ENCODE measurements at regions of chr9 and their contacts with region 1.

Region 1: GRCh38 chr9:76219560-76220152 is 174.6 kb downstream of the RFK start:
- DNase-seq: no peak
- H3K4me3 ChIP-seq: no peak overlapping the region
- H3K4me3 Mint-ChIP-seq: no peak overlapping the region
- H3K27ac Mint-ChIP-seq: no peak overlapping the region
- H3K4me1 ChIP-seq: no peaks in the 10 kb centered on the region
- H3K4me1 Mint-ChIP-seq: peaks cover 9% of the 10 kb centered on the region
- H3K27me3 ChIP-seq: no peaks in the 10 kb centered on the region
- H3K27me3 Mint-ChIP-seq: no peaks in the 10 kb centered on the region
- CTCF ChIP-seq: no peak

Region 2: GRCh38 chr9:76032038-76032796 is 187.4 kb before region 1 on chr9:
- CTCF ChIA-PET with region 1: no interaction called
- POLR2A ChIA-PET with region 1: interaction called, 10 read pairs
- intact Hi-C with region 1: no loop called
- DNase-seq: no peak
- H3K4me3 ChIP-seq: no peak overlapping the region
- H3K4me3 Mint-ChIP-seq: no peak overlapping the region
- H3K27ac Mint-ChIP-seq: no peak overlapping the region
- H3K4me1 ChIP-seq: no peaks in the 10 kb centered on the region
- H3K4me1 Mint-ChIP-seq: no peaks in the 10 kb centered on the region
- H3K27me3 ChIP-seq: no peaks in the 10 kb centered on the region
- H3K27me3 Mint-ChIP-seq: no peaks in the 10 kb centered on the region
- CTCF ChIP-seq: no peak